ENCODE measurements at regions of chr15 and their contacts with region 1.

Region 1: DNA sequence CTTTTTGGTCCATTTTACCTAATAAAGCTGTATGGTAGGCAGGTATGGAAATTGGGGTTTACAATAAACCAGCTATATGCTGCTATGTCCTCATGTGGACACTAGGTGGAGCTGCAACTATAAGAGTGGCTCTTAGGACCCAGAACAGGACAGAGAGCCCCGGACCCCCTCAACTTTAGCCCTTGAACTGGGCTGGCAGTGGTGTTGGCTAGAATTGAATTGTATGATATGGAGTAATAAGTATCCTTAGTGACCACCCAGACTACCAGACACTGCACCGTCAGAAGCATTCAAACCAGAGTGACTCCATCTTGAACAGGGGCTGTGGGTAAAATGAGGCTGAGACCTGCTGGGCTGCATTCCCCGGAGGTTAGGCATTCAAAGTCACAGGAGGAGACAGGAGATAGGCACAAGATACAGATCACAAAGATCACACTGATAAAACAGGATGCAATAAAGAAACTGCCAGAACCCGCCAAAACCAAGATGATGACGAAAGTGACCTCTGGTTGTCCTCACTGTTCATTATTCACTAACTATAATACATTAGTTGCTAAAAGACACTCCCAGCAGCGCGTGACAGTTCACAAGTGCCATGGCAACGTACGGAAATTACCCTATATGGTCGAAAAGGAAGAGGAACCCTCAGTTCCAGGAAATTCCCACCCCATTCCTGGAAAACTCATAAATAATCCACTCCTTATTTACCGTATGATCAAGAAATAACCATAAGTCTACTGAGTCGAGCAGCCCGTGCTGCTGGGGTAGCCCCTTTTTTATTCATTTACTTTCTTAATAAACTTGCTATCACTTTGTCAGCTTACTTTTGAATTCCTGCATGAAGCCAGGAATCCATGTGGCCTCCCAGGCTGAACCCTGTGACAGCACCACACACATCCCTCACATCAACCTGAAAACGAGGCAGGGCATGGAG is 68.7 kb upstream of the BLM start:
- DNase-seq: peak; percentile 83
- ATAC-seq: peak; percentile 66
- H3K4me3 ChIP-seq: peak overlapping the region; percentile 30; the same call in 1 of the 2 replicates
- H3K27ac ChIP-seq: peak overlapping the region; percentile 46
- H3K4me1 ChIP-seq: peaks cover 21% of the 10 kb centered on the region
- H3K27me3 ChIP-seq: no peaks in the 10 kb centered on the region
- CTCF ChIP-seq: peak; percentile 91

Region 2: GRCh38 chr15:90691982-90692773 is 43.8 kb after region 1 on chr15:
- CTCF ChIA-PET with region 1: interaction called, 5 read pairs
- POLR2A ChIA-PET with region 1: no interaction called
- intact Hi-C with region 1: loop called (anchors 1 kb)
- DNase-seq: no peak
- ATAC-seq: no peak
- H3K4me3 ChIP-seq: no peak overlapping the region
- H3K27ac ChIP-seq: no peak overlapping the region
- H3K4me1 ChIP-seq: no peaks in the 10 kb centered on the region
- H3K27me3 ChIP-seq: no peaks in the 10 kb centered on the region
- CTCF ChIP-seq: no peak

Region 3: GRCh38 chr15:90845201-90845949 is 197.0 kb after region 1 on chr15:
- CTCF ChIA-PET with region 1: no interaction called
- POLR2A ChIA-PET with region 1: no interaction called
- intact Hi-C with region 1: no loop called
- DNase-seq: peak; percentile 86
- ATAC-seq: peak; percentile 97
- H3K4me3 ChIP-seq: no peak overlapping the region
- H3K27ac ChIP-seq: peak overlapping the region; percentile 26
- H3K4me1 ChIP-seq: peaks cover 11% of the 10 kb centered on the region
- H3K27me3 ChIP-seq: no peaks in the 10 kb centered on the region
- CTCF ChIP-seq: no peak